ENCODE measurements at regions of chr6 and their contacts with region 1.

Region 1: DNA sequence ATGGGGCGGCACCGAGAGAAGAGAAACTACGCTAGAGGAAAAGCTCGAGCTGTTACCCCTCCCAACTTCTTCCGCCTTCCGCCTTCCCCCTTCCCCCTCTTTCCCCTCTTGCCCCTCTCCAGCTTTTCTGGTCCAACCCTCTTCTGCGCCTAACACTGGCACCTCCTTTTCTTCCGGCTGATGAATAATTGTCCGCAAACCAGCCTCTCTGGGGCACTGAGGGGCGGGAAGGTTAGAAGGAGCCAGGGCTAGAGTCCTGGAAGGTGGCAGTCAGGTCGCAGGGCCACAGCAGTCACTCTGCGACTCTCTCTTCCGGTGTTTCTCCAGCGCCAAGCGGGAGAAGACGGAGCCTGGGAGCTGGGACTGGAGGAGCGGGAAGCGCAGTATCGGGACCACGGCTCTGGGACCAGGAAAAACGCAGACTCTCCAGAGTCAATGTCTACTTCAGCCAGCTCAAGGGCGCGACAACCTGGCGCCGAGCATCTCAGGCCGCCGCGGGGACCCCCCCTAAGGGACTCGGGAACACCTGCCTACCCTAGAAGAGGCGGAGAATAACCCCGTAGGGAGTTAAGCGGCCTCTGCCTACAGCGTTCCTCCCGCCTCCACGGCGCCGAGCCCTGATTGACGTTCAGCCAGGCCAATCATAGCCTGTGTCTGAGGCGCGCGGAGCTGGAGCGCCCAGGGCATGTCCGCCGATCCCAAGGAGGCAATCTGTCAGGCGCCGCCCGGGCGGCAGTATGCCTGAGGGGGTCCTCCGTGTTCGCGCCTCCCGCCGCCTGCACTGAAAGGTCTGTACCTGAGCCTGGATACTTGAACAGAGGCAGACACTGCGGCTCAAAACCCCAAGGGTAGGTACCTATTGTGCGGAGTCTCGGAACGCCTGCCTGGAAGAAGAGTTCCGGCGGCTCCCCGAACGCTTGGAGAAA is 40.4 kb downstream of the PSMB9 start:
- DNase-seq: peak; percentile 89 to 98 (median 94)
- ATAC-seq: peak; percentile 99
- H3K4me3 ChIP-seq: peak overlapping the region; percentile 81
- H3K4me3 Mint-ChIP-seq: peak overlapping the region; percentile 91 to 100 (median 99)
- H3K27ac ChIP-seq: peak overlapping the region; percentile 78
- H3K27ac Mint-ChIP-seq: peak overlapping the region; percentile 78 to 97 (median 94)
- H3K4me1 ChIP-seq: peaks cover 12 to 13% of the 10 kb centered on the region in 2 donors
- H3K4me1 Mint-ChIP-seq: peaks cover 30 to 43% (median 36%) of the 10 kb centered on the region in 7 donors
- H3K27me3 ChIP-seq: no peaks in the 10 kb centered on the region
- H3K27me3 Mint-ChIP-seq: peaks cover 0 to 4% (median 0%) of the 10 kb centered on the region in 5 donors

Region 2: DNA sequence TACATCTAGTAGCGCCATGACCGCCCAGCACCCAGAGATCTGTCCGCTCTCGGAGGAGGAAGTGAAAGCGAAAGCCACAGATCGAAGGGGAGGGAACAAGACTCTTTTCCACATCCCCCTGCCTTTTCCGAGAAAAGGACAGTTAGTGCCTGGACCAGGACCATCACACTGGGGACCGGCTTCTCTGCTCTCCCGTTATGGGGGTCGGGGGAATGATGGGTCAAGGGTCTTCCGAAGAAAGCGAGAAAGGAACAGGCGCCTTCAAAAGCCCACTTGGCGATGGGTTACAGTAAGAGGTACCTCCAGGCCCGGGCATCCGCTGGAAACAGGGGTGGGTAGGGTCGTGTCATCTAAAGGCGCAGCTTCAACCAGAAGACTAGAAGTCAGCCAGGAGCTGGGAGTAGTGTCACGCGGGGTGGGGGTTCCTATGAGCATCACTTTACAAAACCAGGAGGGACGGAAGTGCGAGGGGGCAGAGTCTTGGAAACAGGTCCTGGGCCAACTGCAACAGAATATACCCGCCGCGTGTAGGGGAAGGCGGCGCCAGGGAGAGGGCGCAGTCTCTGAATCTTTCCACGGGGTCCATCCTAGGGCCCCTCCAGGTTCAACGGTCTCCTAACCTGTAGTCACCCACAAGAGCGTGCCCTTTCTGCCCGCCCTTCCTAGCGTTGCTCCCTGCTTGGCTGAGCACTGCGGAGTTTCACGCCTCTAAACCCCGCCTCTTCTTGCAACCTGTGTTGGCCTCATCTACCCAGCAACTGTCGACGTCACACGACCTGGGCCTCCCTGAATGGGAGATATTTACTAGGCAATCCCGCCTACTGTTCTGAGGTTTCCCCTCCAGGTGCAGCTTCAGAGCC is 50.1 kb before region 1 on chr6 and contains the start of gene PSMB8:
- CTCF ChIA-PET with region 1: no interaction called
- POLR2A ChIA-PET with region 1: interaction called, 7 read pairs
- intact Hi-C with region 1: loop called (anchors 2 kb)
- DNase-seq: peak; percentile 92 to 99 (median 97)
- ATAC-seq: peak; percentile 90
- H3K4me3 ChIP-seq: peak within 1 kb of the TSS; percentile 97
- H3K4me3 Mint-ChIP-seq: peak within 1 kb of the TSS; percentile 92 to 99 (median 98)
- H3K27ac ChIP-seq: peak within 1 kb of the TSS; percentile 97
- H3K27ac Mint-ChIP-seq: peak within 1 kb of the TSS; percentile 99 to 100 (median 100)
- H3K4me1 ChIP-seq: peaks cover 71 to 72% of the 10 kb centered on the region in 2 donors
- H3K4me1 Mint-ChIP-seq: peaks cover 66 to 83% (median 79%) of the 10 kb centered on the region in 7 donors
- H3K27me3 ChIP-seq: no peaks in the 10 kb centered on the region
- H3K27me3 Mint-ChIP-seq: no peaks in the 10 kb centered on the region
- total RNA-seq, gene PSMB8: 111 to 419 (median 115) TPM

Region 3: GRCh38 chr6:32853541-32854375 is 40.6 kb before region 1 on chr6 and contains the starts of genes PSMB9 and TAP1:
- CTCF ChIA-PET with region 1: no interaction called
- POLR2A ChIA-PET with region 1: interaction called, 12 read pairs
- intact Hi-C with region 1: no loop called
- DNase-seq: peak; percentile 92 to 97 (median 94)
- ATAC-seq: peak; percentile 92
- H3K4me3 ChIP-seq: peak within 1 kb of the TSS; percentile 91
- H3K4me3 Mint-ChIP-seq: peak within 1 kb of the TSS; percentile 96 to 100 (median 100)
- H3K27ac ChIP-seq: peak within 1 kb of the TSS; percentile 100
- H3K27ac Mint-ChIP-seq: peak within 1 kb of the TSS; percentile 97 to 100 (median 100)
- H3K4me1 ChIP-seq: peaks cover 45 to 57% of the 10 kb centered on the region in 2 donors
- H3K4me1 Mint-ChIP-seq: peaks cover 61 to 80% (median 72%) of the 10 kb centered on the region in 7 donors
- H3K27me3 ChIP-seq: no peaks in the 10 kb centered on the region
- H3K27me3 Mint-ChIP-seq: no peaks in the 10 kb centered on the region
- total RNA-seq, gene PSMB9: 70.3 to 452 (median 90.5) TPM
- total RNA-seq, gene TAP1: 92.1 to 500 (median 103) TPM

Region 4: DNA sequence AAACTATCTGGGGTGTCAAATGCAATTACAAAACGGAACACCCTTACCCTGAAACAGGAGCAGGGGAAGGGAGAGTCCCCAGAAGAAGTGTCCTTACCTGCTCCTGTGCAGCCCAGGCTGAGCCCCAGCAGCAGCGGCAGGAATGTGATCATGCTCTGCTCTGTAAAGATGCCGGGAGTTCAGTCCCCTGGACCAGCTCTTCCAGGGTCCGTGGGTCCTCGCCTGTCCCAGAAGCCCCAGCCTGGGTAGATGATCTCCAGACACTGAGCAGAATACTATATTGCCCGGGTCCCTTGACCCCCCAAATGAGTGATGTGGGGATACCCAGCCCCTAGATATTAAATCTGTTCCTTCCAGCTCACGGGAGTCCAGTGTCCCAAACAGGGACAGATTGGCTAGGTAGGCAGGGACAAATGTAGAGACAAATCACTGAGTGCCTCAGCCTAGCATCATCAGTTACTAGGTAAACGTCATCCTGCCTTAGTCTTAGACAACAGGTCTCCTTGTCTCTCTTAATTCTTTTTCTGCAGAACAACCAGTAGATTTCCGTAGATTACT is 46.4 kb after region 1 on chr6 and contains the start of gene HLA-DMB:
- CTCF ChIA-PET with region 1: interaction called, 6 read pairs
- POLR2A ChIA-PET with region 1: interaction called, 24 read pairs
- intact Hi-C with region 1: loop called (anchors 1 to 2 kb)
- DNase-seq: peak in 7 of 9 donors; percentile 64 to 80 (median 74)
- ATAC-seq: peak; percentile 86
- H3K4me3 ChIP-seq: peak within 1 kb of the TSS; percentile 66
- H3K4me3 Mint-ChIP-seq: peak within 1 kb of the TSS; percentile 85 to 97 (median 94)
- H3K27ac ChIP-seq: peak within 1 kb of the TSS; percentile 75
- H3K27ac Mint-ChIP-seq: peak within 1 kb of the TSS; percentile 95 to 98 (median 96)
- H3K4me1 ChIP-seq: peaks cover 50 to 55% of the 10 kb centered on the region in 2 donors
- H3K4me1 Mint-ChIP-seq: peaks cover 55 to 67% (median 62%) of the 10 kb centered on the region in 7 donors
- H3K27me3 ChIP-seq: no peaks in the 10 kb centered on the region
- H3K27me3 Mint-ChIP-seq: peaks cover 0 to 7% (median 0%) of the 10 kb centered on the region in 5 donors
- total RNA-seq, gene HLA-DMB: 7.8 to 82.5 (median 9.1) TPM

Region 5: GRCh38 chr6:33075568-33076405 is 181.4 kb after region 1 on chr6 and contains the start of gene HLA-DPB1:
- CTCF ChIA-PET with region 1: no interaction called
- POLR2A ChIA-PET with region 1: no interaction called
- intact Hi-C with region 1: loop called in 1 of 2 experiments (anchors 10 kb)
- DNase-seq: peak in 7 of 9 donors; percentile 53 to 83 (median 67)
- ATAC-seq: peak; percentile 94
- H3K4me3 ChIP-seq: peak within 1 kb of the TSS; percentile 74
- H3K4me3 Mint-ChIP-seq: peak within 1 kb of the TSS; percentile 60 to 91 (median 84)
- H3K27ac ChIP-seq: peak within 1 kb of the TSS; percentile 76
- H3K27ac Mint-ChIP-seq: peak within 1 kb of the TSS; percentile 32 to 93 (median 76)
- H3K4me1 ChIP-seq: peaks cover 5 to 44% of the 10 kb centered on the region in 2 donors
- H3K4me1 Mint-ChIP-seq: peaks cover 34 to 71% (median 54%) of the 10 kb centered on the region in 7 donors
- H3K27me3 ChIP-seq: no peaks in the 10 kb centered on the region
- H3K27me3 Mint-ChIP-seq: peaks cover 0 to 11% (median 2%) of the 10 kb centered on the region in 5 donors
- total RNA-seq, gene HLA-DPB1: 13.7 to 308 (median 43.3) TPM

Measured in naive thymus-derived CD4-positive, alpha-beta T cell (primary cell).